PC-3 (cell line): ENCODE measurements at regions of chr5 and their contacts with region 1.

Region 1: GRCh38 chr5:96067894-96068614 is 106.4 kb upstream of the ELL2 start:
- DNase-seq: peak; percentile 90
- ATAC-seq: peak; percentile 84
- H3K4me3 ChIP-seq: peak overlapping the region; percentile 53
- H3K27ac ChIP-seq: peak overlapping the region; percentile 72
- H3K4me1 ChIP-seq: peaks cover 47% of the 10 kb centered on the region
- H3K27me3 ChIP-seq: no peaks in the 10 kb centered on the region
- CTCF ChIP-seq: no peak

Region 2: DNA sequence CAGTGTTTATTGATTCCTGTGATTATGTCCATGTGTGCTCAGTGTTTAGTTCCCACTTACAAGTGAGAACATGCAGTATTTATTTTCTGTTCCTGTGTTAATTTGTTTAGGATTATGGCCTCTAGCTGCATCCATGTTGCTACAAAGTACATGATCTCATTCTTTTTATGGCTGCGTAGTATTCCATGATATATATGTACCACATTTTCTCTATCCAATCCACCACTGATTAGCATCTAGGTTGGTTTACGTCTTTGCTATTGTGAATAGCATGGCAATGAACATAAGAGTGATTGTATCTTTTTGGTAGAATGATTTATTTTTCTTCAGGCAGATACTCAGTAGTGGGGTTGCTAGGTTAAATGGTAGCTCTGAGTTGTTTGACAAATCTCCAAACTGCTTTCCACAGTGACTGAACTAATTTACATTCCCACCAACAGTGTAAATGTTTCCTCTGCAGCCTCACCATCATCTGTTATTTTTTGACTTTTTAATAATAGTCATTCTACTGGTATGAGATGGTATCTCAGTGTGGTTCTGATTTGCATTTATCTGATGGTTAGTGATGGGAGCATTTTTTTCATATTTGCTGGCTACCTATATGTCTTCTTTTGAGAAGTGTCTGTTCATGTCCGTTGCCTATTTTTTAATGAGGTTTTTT is 58.9 kb before region 1 on chr5:
- CTCF ChIA-PET with region 1: no interaction called
- POLR2A ChIA-PET with region 1: no interaction called
- intact Hi-C with region 1: no loop called
- DNase-seq: no peak
- ATAC-seq: no peak
- H3K4me3 ChIP-seq: no peak overlapping the region
- H3K27ac ChIP-seq: no peak overlapping the region
- H3K4me1 ChIP-seq: no peaks in the 10 kb centered on the region
- H3K27me3 ChIP-seq: no peaks in the 10 kb centered on the region
- CTCF ChIP-seq: no peak

Region 3: GRCh38 chr5:96026406-96027041 is 41.5 kb before region 1 on chr5:
- CTCF ChIA-PET with region 1: no interaction called
- POLR2A ChIA-PET with region 1: no interaction called
- intact Hi-C with region 1: loop called (anchors 5 kb)
- DNase-seq: peak; percentile 82
- ATAC-seq: peak; percentile 84
- H3K4me3 ChIP-seq: peak overlapping the region; percentile 2; the same call in 1 of the 2 replicates
- H3K27ac ChIP-seq: peak overlapping the region; percentile 80
- H3K4me1 ChIP-seq: peaks cover 61% of the 10 kb centered on the region
- H3K27me3 ChIP-seq: no peaks in the 10 kb centered on the region
- CTCF ChIP-seq: no peak